ENCODE measurements at regions of chr14 and their contacts with region 1.

Region 1: GRCh38 chr14:23320774-23321571 is at the start of gene PABPN1:
- DNase-seq: peak; percentile 100
- H3K4me3 ChIP-seq: peak within 1 kb of the TSS; percentile 96 to 98
- H3K27ac ChIP-seq: peak within 1 kb of the TSS; percentile 98
- H3K4me1 ChIP-seq: no peaks in the 10 kb centered on the region
- H3K27me3 ChIP-seq: no peaks in the 10 kb centered on the region
- CTCF ChIP-seq: peak in 1 of 4 experiments; percentile 5
- POLR2A ChIP-seq: peak; percentile 68
- total RNA-seq, gene PABPN1: 62.7 to 113 TPM

Region 2: DNA sequence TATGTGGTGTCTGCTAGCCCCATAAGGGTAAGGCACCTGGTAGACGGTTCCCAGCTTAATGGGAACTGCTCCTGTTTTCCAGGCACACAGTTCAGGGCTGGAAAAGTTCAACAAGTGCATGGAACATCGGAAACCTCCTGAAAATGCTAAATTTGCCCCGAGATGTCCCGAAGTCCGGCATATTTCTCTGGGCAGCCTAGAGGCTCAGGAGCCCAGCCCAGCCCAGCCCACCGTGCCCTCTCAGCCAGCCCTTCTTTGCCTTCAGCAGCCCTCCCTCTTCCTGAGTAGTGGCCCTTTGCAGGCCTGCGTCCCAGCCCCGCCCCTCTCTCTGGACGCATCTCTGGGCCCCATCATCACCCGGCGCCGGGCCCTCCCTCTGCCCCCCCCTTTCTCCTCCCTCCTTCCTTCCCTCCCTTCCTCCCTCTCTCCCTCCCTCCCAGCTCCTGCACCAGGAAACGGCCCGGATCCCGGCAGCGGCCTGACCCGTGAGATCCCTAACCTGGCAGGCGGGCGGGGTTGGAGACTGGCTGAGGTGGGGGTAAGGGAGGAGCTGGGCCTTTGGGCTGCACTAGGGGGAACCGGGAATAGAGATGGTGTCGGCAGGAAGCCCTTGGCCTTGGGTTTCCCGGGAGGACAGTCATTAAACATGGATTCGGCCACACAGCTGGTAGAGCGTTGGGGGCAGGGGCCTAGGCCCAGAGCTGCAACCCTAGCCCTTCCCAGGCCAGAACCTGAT is 14.4 kb before region 1 on chr14 and contains the start of gene BCL2L2:
- intact Hi-C with region 1: loop called (anchors 2 kb)
- DNase-seq: peak; percentile 90
- H3K4me3 ChIP-seq: peak within 1 kb of the TSS; percentile 52 to 62
- H3K27ac ChIP-seq: peak within 1 kb of the TSS; percentile 85 to 87
- H3K4me1 ChIP-seq: peaks cover 12% of the 10 kb centered on the region
- H3K27me3 ChIP-seq: no peaks in the 10 kb centered on the region
- CTCF ChIP-seq: peak in 2 of 4 experiments; percentile 9 to 17
- POLR2A ChIP-seq: peak; percentile 67
- total RNA-seq, gene BCL2L2: 45.4 to 87.3 TPM

Region 3: GRCh38 chr14:23469127-23469905 is 148.3 kb after region 1 on chr14 and contains the start of gene NGDN:
- intact Hi-C with region 1: loop called (anchors 5 kb)
- DNase-seq: peak; percentile 98
- H3K4me3 ChIP-seq: peak within 1 kb of the TSS; percentile 82 to 87
- H3K27ac ChIP-seq: peak within 1 kb of the TSS; percentile 83
- H3K4me1 ChIP-seq: peaks cover 5% of the 10 kb centered on the region
- H3K27me3 ChIP-seq: no peaks in the 10 kb centered on the region
- CTCF ChIP-seq: peak; percentile 64 to 96 (median 87)
- POLR2A ChIP-seq: peak; percentile 12
- total RNA-seq, gene NGDN: 33.7 to 37.0 TPM

Region 4: GRCh38 chr14:23567192-23568020 is 246.4 kb after region 1 on chr14 and contains the start of gene AP1G2:
- intact Hi-C with region 1: loop called (anchors 10 kb)
- DNase-seq: peak; percentile 85
- H3K4me3 ChIP-seq: peak within 1 kb of the TSS; percentile 51 to 57
- H3K27ac ChIP-seq: peak within 1 kb of the TSS; percentile 83 to 90
- H3K4me1 ChIP-seq: no peaks in the 10 kb centered on the region
- H3K27me3 ChIP-seq: no peaks in the 10 kb centered on the region
- CTCF ChIP-seq: peak in 1 of 4 experiments; percentile 11
- POLR2A ChIP-seq: peak; percentile 75
- total RNA-seq, gene AP1G2: 95.3 to 134 TPM

Region 5: DNA sequence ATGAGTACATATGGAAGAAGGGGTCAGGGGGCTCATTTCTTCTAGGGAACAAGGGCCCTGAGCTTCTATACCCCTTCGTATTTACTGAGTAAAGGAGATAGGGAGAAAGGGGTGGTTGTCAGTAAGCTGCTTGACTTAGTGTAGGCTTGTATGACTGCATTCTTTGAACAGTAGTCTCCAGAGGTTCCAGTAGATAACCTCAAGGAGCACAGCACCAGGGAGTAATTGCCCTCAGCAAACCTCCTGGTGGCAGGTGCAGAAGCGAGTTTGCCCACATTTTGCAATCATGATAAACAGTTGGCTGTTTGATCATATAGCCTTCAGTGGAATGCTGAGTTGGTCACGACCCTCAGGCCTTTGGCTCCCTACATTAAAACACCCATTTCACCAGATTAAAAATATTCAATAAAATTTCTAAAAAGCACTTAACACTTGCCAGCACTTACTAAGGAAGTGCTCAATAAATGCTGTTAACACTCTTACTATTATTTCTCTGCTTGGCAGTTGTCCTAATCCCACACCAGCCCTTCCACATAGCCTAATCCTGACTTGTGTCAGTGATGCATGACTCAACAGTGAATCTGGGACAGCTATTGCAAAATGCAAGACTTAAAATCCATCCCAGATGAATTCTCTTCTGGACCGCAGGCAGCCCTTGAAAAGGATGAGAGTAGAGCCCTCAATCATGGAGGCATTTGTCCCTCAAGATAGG is 664.1 kb after region 1 on chr14:
- intact Hi-C with region 1: no loop called
- DNase-seq: no peak
- H3K4me3 ChIP-seq: no peak overlapping the region
- H3K27ac ChIP-seq: no peak overlapping the region
- H3K4me1 ChIP-seq: no peaks in the 10 kb centered on the region
- H3K27me3 ChIP-seq: no peaks in the 10 kb centered on the region
- CTCF ChIP-seq: no peak
- POLR2A ChIP-seq: no peak

Measured in prostate gland (tissue), 2 donors.